ENCODE measurements at regions of chr1 and their contacts with region 1.

Region 1: GRCh38 chr1:15847100-15847892 is at the start of gene SPEN:
- DNase-seq: peak; percentile 93 to 99
- H3K4me3 ChIP-seq: peak within 1 kb of the TSS; percentile 98 to 100
- H3K27ac ChIP-seq: peak within 1 kb of the TSS; percentile 96 to 99
- H3K4me1 ChIP-seq: peaks cover 7 to 38% of the 10 kb centered on the region in 2 donors
- H3K27me3 ChIP-seq: no peaks in the 10 kb centered on the region
- CTCF ChIP-seq: no peak
- total RNA-seq, gene SPEN: 53.9 TPM

Region 2: DNA sequence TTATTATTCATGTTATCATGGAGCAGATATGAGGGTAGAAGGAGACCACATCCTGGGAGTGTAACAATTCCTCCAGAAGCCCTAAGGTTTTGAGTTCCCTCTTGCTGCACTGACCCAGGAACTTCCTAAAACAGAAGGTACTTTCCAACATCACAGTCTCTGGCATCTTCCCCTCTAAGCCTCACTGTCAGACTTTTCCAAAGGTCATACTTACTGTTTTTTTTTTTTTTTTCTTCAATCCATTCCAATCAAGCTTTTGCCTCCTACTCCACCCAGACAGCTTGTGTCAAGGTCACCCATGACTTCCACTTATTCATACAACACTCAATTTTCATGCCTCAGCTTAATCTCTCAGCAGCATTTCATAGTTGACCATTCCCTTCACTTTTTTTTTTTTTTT is 21.5 kb before region 1 on chr1:
- intact Hi-C with region 1: no loop called
- DNase-seq: no peak
- H3K4me3 ChIP-seq: no peak overlapping the region
- H3K27ac ChIP-seq: peak overlapping the region; percentile 23 to 56
- H3K4me1 ChIP-seq: peaks cover 3 to 4% of the 10 kb centered on the region in 2 donors
- H3K27me3 ChIP-seq: no peaks in the 10 kb centered on the region
- CTCF ChIP-seq: no peak

Region 3: GRCh38 chr1:15835741-15836510 is 11.4 kb before region 1 on chr1:
- intact Hi-C with region 1: loop called (anchors 1 kb)
- DNase-seq: peak; percentile 97 to 100
- H3K4me3 ChIP-seq: peak overlapping the region; percentile 79 to 95
- H3K27ac ChIP-seq: peak overlapping the region; percentile 100
- H3K4me1 ChIP-seq: peaks cover 0 to 30% of the 10 kb centered on the region in 2 donors
- H3K27me3 ChIP-seq: no peaks in the 10 kb centered on the region
- CTCF ChIP-seq: no peak

Measured in ascending aorta (tissue), 2 donors.